Activated CD4-positive, alpha-beta T cell treated with anti-CD3 and anti-CD28 coated beads for 36 hours (primary cell): ENCODE measurements at regions of chr16 and their contacts with region 1.

Region 1: GRCh38 chr16:3264137-3265036 is 8.0 kb upstream of the MEFV start:
- DNase-seq: peak; percentile 99
- ATAC-seq: peak; percentile 95
- H3K4me3 Mint-ChIP-seq: peak overlapping the region; percentile 83
- H3K27ac Mint-ChIP-seq: peak overlapping the region; percentile 90
- H3K4me1 Mint-ChIP-seq: peaks cover 25% of the 10 kb centered on the region
- H3K27me3 Mint-ChIP-seq: no peaks in the 10 kb centered on the region

Region 2: DNA sequence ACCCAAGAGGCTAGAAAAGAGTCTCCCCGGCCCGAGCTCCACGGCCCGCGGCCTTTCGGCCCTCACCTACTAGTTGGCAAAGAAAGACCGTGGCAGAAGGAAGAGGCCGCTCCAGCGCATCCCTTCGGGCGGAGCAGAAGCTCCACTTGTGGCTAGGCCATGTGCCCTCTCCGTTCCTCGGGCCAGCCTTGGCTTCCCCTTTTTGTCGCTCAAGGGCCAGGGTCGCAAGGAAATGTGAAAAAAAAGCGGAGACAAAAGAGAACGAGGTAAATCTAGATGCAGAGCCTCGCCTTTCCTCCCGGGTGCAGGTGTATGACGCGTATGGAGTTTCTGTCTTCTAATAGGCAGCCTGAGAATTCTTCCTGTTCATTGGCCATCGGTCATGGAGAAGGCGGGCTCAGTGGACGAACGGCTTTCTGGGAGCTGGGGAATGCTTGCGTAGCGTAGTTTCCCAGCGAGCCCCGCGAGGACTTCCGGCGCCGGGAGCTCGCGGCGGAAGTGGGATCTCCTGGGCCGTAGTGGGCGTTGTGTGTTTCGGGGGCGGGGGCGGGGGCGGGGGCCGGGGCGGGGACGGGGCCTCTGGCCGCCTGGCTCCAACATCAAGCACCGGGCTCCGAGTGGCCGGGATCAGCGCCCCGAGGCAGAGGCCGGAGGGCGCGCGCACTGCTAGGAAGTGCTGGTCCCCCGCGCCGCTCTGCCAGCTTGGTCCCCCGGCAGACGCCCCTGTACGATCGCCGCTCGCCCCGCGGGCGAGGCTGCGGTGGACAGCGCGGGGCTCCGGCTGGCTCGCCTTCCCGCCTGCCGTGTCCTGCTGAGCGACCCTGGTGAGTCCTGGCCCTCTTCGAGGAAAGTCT is 129.6 kb before region 1 on chr16 and contains the start of gene ZNF213:
- CTCF ChIA-PET with region 1: no interaction called
- POLR2A ChIA-PET with region 1: no interaction called
- intact Hi-C with region 1: loop called in 1 of 2 experiments (anchors 1 kb)
- DNase-seq: peak; percentile 96
- ATAC-seq: peak; percentile 97
- H3K4me3 Mint-ChIP-seq: peak within 1 kb of the TSS; percentile 98
- H3K27ac Mint-ChIP-seq: peak within 1 kb of the TSS; percentile 95
- H3K4me1 Mint-ChIP-seq: peaks cover 30% of the 10 kb centered on the region
- H3K27me3 Mint-ChIP-seq: no peaks in the 10 kb centered on the region
- total RNA-seq, gene ZNF213: 7.6 to 8.3 TPM

Region 3: DNA sequence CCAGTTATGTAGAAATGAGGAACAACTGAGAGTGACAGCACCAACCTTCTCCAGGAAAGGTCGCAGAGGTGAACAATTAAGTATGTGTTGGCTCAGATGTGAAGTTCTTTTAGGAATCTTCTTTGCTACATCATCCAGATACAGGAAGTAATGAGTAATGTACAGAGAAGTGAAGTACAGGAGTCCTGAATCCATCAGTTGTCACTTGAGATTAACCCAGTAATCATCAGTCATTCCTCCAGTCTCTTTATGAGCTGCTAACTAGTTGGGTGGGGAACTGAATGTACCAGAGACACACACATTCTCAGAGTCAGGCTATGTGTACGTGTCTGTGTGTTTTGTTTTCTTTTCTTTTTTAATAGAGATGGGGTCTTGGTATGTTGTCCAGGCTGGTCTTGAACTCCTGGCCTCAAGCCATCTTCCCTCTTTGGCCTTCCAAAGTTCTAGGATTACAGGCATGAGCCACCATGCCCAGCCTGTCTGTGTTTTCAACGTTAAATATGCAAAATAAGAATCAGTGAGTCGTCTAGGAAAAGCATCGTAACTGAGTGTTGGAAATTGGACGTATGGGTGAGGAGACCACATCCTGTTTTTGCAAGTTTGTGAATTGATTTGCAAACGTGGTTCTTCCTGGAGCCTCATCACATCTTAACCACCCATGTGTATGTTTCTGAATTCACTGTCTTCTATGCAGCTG is 49.3 kb before region 1 on chr16:
- CTCF ChIA-PET with region 1: interaction called, 3 read pairs
- POLR2A ChIA-PET with region 1: no interaction called
- intact Hi-C with region 1: loop called (anchors 1 to 2 kb)
- DNase-seq: peak; percentile 49
- ATAC-seq: peak; percentile 82
- H3K4me3 Mint-ChIP-seq: peak overlapping the region; percentile 4
- H3K27ac Mint-ChIP-seq: peak overlapping the region; percentile 94
- H3K4me1 Mint-ChIP-seq: peaks cover 32% of the 10 kb centered on the region
- H3K27me3 Mint-ChIP-seq: no peaks in the 10 kb centered on the region

Region 4: DNA sequence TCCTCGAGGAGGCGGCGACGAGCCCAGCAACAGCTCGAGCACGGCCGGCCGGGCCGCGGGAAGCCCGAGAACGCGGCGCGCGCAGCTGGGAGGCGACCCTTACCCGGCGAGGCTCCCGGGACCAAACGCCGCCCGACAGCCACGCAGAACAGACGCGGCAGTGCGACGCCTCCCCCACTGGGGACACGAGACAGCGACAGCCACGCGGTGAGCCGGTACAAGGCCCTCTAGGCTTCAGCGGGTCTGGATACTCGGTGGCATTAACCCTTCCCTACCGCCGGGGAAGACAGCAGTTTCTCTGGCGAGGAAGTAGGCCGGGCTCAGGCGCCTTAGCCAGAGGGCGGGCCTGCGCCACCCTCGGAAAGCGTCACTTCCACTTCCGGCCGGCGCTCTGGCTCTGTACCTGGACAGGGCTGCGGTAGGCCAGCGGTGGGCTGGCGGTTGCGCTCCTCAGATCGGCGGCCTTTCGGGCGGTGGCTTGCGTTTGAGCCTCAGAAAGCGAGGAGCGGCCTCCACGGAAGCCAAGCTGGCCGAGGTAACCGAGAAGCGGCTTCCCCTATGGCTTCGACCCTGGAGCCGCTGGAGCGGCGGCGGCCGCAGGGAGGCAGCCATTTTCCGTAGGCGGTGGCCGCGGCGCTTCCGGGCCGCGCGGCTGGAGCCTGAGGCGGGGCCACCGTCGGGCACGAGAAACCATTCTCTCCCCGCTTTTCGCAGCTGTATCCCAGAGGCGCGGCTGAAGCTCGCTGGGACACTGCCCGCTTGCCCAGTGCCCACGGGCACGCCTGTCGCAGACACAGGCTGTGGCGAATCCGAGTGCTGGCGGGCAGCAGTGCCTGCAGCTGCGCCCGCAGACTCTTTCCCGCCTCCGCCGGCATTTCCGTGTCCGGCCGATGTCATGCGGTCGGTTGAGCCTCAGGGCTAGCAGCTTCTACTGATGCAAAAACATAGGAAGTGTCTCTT is 41.0 kb after region 1 on chr16 and contains the starts of genes TIGD7 and ZNF75A:
- CTCF ChIA-PET with region 1: interaction called, 5 read pairs
- POLR2A ChIA-PET with region 1: no interaction called
- intact Hi-C with region 1: loop called (anchors 1 kb)
- DNase-seq: peak; percentile 90
- ATAC-seq: peak; percentile 99
- H3K4me3 Mint-ChIP-seq: peak within 1 kb of the TSS; percentile 75
- H3K27ac Mint-ChIP-seq: peak within 1 kb of the TSS; percentile 84
- H3K4me1 Mint-ChIP-seq: peaks cover 15% of the 10 kb centered on the region
- H3K27me3 Mint-ChIP-seq: no peaks in the 10 kb centered on the region
- total RNA-seq, gene TIGD7: 2.9 TPM
- total RNA-seq, gene ZNF75A: 23.2 to 27.4 TPM

Region 5: DNA sequence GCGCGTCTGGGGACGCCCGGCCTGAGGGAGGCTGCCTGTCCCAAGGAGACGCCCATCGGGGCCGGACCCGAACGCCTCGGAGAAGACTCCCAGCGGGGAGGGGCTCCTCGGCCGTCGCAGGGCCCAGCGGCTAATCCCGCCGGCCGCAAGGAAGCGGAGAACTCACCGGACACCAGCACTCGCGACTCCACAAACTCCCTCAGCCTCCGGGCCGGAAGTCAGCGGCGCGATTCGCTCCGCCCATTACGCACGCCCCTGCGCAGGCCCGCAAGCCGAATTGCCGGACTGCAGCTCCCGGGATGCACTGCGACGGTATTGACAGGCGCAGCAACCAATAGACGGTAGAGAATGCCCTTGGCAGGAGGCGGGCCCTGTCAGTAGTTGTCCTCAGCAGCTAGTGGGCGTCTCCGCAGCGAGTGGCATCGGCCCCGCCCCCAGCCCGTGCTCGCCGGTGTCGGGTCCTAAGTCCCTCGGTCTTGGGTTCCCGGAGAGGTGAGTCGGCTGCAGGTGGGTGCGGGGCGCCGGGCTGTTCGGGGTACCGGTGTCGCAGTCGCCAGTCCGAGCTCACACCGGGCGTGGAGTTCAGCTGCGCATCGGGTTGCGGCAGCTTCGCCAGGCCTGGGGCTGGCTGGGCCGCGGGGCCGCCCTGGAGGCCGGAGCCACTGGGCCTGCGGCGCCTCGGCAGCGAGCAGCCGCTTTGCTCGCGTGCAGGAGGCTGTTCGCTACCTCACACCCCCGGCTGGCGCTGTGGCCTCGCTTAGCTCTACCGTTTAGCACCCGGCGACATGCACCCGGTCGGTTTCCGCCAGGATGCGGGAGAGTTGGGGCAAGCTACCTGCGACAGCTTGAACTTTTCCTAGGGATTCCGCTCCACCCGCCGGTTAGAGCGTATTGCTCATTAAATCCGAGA is 136.6 kb after region 1 on chr16 and contains the starts of genes ZNF174 and ZSCAN32:
- CTCF ChIA-PET with region 1: interaction called, 3 read pairs
- POLR2A ChIA-PET with region 1: interaction called, 8 read pairs
- intact Hi-C with region 1: loop called in 1 of 2 experiments (anchors 1 kb)
- DNase-seq: peak; percentile 99
- ATAC-seq: peak; percentile 99
- H3K4me3 Mint-ChIP-seq: peak within 1 kb of the TSS; percentile 91
- H3K27ac Mint-ChIP-seq: peak within 1 kb of the TSS; percentile 83
- H3K4me1 Mint-ChIP-seq: peaks cover 49% of the 10 kb centered on the region
- H3K27me3 Mint-ChIP-seq: no peaks in the 10 kb centered on the region
- total RNA-seq, gene ZNF174: 7.4 to 9.5 TPM
- total RNA-seq, gene ZSCAN32: 15.7 to 17.4 TPM